MCF 10A (cell line): ENCODE measurements at regions of chr16 and their contacts with region 1.

Region 1: GRCh38 chr16:12095275-12096156 is 119.0 kb downstream of the SNX29 start:
- DNase-seq: peak; percentile 57
- H3K4me3 Mint-ChIP-seq: no peak overlapping the region
- H3K27ac Mint-ChIP-seq: no peak overlapping the region
- H3K4me1 Mint-ChIP-seq: peaks cover 16% of the 10 kb centered on the region
- H3K27me3 Mint-ChIP-seq: no peaks in the 10 kb centered on the region
- CTCF ChIP-seq: peak; percentile 82

Region 2: GRCh38 chr16:11706180-11706742 is 389.3 kb before region 1 on chr16:
- CTCF ChIA-PET with region 1: no interaction called
- POLR2A ChIA-PET with region 1: no interaction called
- intact Hi-C with region 1: no loop called
- DNase-seq: no peak
- H3K4me3 Mint-ChIP-seq: no peak overlapping the region
- H3K27ac Mint-ChIP-seq: no peak overlapping the region
- H3K4me1 Mint-ChIP-seq: no peaks in the 10 kb centered on the region
- H3K27me3 Mint-ChIP-seq: no peaks in the 10 kb centered on the region
- CTCF ChIP-seq: no peak

Region 3: GRCh38 chr16:12043953-12044352 is 51.6 kb before region 1 on chr16:
- CTCF ChIA-PET with region 1: no interaction called
- POLR2A ChIA-PET with region 1: no interaction called
- intact Hi-C with region 1: no loop called
- DNase-seq: no peak
- H3K4me3 Mint-ChIP-seq: no peak overlapping the region
- H3K27ac Mint-ChIP-seq: no peak overlapping the region
- H3K4me1 Mint-ChIP-seq: peaks cover 4% of the 10 kb centered on the region
- H3K27me3 Mint-ChIP-seq: no peaks in the 10 kb centered on the region
- CTCF ChIP-seq: no peak

Region 4: GRCh38 chr16:12079412-12079965 is 16.0 kb before region 1 on chr16:
- CTCF ChIA-PET with region 1: interaction called, 41 read pairs
- POLR2A ChIA-PET with region 1: no interaction called
- intact Hi-C with region 1: no loop called
- DNase-seq: no peak
- H3K4me3 Mint-ChIP-seq: no peak overlapping the region
- H3K27ac Mint-ChIP-seq: no peak overlapping the region
- H3K4me1 Mint-ChIP-seq: no peaks in the 10 kb centered on the region
- H3K27me3 Mint-ChIP-seq: no peaks in the 10 kb centered on the region
- CTCF ChIP-seq: no peak

Region 5: DNA sequence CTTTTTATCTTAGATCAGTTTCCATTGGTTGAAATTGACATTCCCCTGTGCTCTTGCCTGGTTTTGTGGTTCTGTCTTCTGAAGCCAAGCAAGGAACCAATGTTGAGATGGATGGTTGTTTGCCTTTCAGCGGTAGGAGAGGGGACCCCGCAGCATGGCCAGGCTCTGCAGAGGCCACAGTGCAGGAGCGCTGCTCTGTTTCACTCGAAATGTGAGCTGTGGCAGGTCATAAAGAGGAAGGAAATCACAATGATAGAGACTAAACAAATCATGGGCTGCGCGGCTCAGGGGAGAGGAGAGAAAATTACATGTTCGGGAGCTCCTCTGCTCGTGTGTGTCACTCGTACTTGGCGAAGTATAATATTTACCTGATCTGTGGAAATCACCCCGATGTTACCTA is 29.2 kb after region 1 on chr16:
- CTCF ChIA-PET with region 1: interaction called, 10 read pairs
- POLR2A ChIA-PET with region 1: no interaction called
- intact Hi-C with region 1: no loop called
- DNase-seq: no peak
- H3K4me3 Mint-ChIP-seq: no peak overlapping the region
- H3K27ac Mint-ChIP-seq: no peak overlapping the region
- H3K4me1 Mint-ChIP-seq: peaks cover 13% of the 10 kb centered on the region
- H3K27me3 Mint-ChIP-seq: no peaks in the 10 kb centered on the region
- CTCF ChIP-seq: no peak

Region 6: GRCh38 chr16:12152737-12153136 is 57.2 kb after region 1 on chr16:
- CTCF ChIA-PET with region 1: interaction called, 20 read pairs
- POLR2A ChIA-PET with region 1: no interaction called
- intact Hi-C with region 1: no loop called
- DNase-seq: no peak
- H3K4me3 Mint-ChIP-seq: no peak overlapping the region
- H3K27ac Mint-ChIP-seq: no peak overlapping the region
- H3K4me1 Mint-ChIP-seq: no peaks in the 10 kb centered on the region
- H3K27me3 Mint-ChIP-seq: no peaks in the 10 kb centered on the region
- CTCF ChIP-seq: no peak

Region 7: DNA sequence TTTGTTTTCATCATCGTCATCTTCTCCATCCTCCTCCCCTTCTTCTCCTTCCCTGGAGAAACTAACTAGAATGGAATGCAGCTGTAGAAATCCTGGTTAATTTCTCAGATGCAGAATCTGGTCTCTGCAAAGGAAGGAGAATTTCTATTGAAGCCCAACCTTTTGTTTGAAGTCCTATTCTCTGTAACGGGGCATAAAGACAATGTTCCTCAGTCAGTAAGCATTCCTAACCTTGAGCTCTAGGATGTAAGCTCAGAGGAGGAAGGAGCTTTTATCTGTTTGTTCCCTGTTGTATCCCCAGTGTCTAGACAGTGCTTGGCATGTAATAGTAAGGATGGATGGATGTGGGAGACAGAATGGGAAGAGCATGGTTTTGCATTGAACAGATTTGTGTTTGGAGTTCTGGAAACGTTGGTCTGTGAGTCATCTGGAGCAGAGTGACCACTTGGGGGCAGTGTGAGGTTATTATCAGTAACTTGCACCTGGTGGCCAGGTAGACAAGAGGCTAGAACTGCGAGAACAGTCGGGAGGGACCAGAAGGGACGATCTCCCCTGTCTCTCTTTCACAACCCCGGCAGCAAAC is 244.7 kb after region 1 on chr16:
- CTCF ChIA-PET with region 1: interaction called, 23 read pairs
- POLR2A ChIA-PET with region 1: no interaction called
- intact Hi-C with region 1: loop called (anchors 1 kb)
- DNase-seq: peak; percentile 54
- H3K4me3 Mint-ChIP-seq: no peak overlapping the region
- H3K27ac Mint-ChIP-seq: no peak overlapping the region
- H3K4me1 Mint-ChIP-seq: peaks cover 9% of the 10 kb centered on the region
- H3K27me3 Mint-ChIP-seq: no peaks in the 10 kb centered on the region
- CTCF ChIP-seq: peak; percentile 32

Region 8: GRCh38 chr16:12455287-12455798 is 359.8 kb after region 1 on chr16:
- CTCF ChIA-PET with region 1: interaction called, 20 read pairs
- POLR2A ChIA-PET with region 1: no interaction called
- intact Hi-C with region 1: loop called (anchors 5 kb)
- DNase-seq: peak; percentile 56
- H3K4me3 Mint-ChIP-seq: no peak overlapping the region
- H3K27ac Mint-ChIP-seq: no peak overlapping the region
- H3K4me1 Mint-ChIP-seq: no peaks in the 10 kb centered on the region
- H3K27me3 Mint-ChIP-seq: no peaks in the 10 kb centered on the region
- CTCF ChIP-seq: peak; percentile 95

Region 9: GRCh38 chr16:12819126-12820117 is 723.9 kb after region 1 on chr16:
- CTCF ChIA-PET with region 1: interaction called, 9 read pairs
- POLR2A ChIA-PET with region 1: no interaction called
- intact Hi-C with region 1: loop called (anchors 5 kb)
- DNase-seq: peak; percentile 77
- H3K4me3 Mint-ChIP-seq: no peak overlapping the region
- H3K27ac Mint-ChIP-seq: no peak overlapping the region
- H3K4me1 Mint-ChIP-seq: no peaks in the 10 kb centered on the region
- H3K27me3 Mint-ChIP-seq: no peaks in the 10 kb centered on the region
- CTCF ChIP-seq: peak; percentile 82